Thyroid gland (tissue), 4 donors: ENCODE measurements at regions of chr17 and their contacts with region 1.

Region 1: DNA sequence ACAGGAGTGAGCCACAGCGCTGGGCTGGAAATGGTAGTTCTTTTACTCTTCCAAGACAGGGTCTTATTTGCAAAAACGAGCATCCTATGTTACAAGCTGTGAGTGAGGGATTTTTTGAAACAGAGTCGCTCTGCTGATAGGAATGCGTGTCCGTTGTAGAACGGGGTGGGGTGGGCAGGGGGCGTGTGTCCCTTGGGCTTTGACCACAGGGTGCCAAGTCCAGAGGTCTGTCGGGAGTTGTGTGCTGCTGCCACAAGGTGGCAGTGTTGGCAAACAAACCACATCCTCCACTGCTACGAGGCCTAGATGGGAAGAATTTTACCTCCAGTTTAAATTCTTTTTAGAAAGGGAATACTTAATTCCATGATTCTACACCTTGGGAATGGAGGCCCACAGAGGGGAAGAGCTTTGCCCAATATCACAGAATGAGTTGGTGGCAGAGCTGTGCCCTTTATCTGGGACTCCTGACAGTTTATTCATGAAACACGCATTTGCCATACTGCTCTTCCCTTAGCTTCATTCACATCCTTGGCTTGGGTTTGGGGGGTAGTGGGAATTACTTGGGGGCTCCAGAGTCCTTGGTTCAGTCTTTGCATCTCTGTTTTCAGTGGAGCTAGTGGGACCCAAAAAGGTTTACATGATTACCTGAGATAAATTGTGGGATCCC is 30.6 kb upstream of the ETV4 start:
- DNase-seq: peak; percentile 65 to 74
- H3K4me3 ChIP-seq: no peak overlapping the region
- H3K27ac ChIP-seq: no peak overlapping the region
- H3K4me1 ChIP-seq: peaks cover 0 to 8% of the 10 kb centered on the region in 2 donors
- H3K27me3 ChIP-seq: no peaks in the 10 kb centered on the region
- CTCF ChIP-seq: peak; percentile 70 to 90 (median 85)
- POLR2A ChIP-seq: no peak

Region 2: DNA sequence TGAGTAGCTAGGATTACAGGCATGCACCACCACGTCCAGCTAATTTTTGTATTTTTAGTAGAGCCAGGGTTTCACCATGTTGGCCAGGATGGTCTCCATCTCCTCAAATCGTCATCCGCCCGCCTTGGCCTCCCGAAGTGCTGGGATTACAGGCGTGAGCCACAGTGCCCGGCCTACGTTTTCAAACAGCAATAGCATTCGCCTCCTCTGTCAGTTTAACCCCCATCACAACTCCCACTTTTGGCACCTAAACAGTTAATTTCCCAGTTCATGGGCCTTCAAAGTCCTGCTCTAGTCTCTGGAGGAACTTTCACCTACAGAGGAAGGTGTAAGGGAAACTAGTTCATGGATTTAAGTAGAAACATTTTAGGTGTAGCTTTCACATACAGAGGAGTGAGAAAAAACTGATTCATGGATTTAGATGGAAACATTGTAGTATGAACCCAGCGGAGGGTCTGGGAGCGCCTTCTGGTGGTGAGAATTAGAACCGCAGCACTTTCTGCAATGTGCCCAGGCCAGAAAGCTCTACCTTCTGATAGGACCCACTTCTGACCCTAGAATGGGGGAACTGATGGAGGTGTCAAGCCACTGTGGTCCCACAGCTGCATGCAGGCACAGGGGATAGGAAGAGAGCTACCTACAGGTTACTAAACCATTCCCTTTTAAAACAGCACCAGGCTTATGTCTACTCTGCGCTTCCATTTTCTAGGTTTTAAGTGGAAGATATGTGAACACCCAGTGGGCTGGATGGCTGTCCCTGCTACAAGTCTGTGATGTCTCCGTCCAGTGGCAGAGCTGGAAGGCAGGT is 97.0 kb after region 1 on chr17:
- intact Hi-C with region 1: loop called (anchors 1 kb)
- DNase-seq: peak; percentile 72 to 73
- H3K4me3 ChIP-seq: no peak overlapping the region
- H3K27ac ChIP-seq: no peak overlapping the region
- H3K4me1 ChIP-seq: peaks cover 0 to 24% of the 10 kb centered on the region in 2 donors
- H3K27me3 ChIP-seq: no peaks in the 10 kb centered on the region
- CTCF ChIP-seq: peak; percentile 78 to 94 (median 88)
- POLR2A ChIP-seq: no peak

Region 3: GRCh38 chr17:43755389-43755875 is 178.7 kb after region 1 on chr17:
- intact Hi-C with region 1: loop called (anchors 5 kb)
- DNase-seq: peak; percentile 39 to 44
- H3K4me3 ChIP-seq: peak overlapping the region in 1 of 3 donors; percentile 5
- H3K27ac ChIP-seq: no peak overlapping the region
- H3K4me1 ChIP-seq: peaks cover 10% of the 10 kb centered on the region in 2 donors
- H3K27me3 ChIP-seq: no peaks in the 10 kb centered on the region
- CTCF ChIP-seq: no peak
- POLR2A ChIP-seq: no peak